ENCODE measurements at regions of chr6 and their contacts with region 1.

Region 1: DNA sequence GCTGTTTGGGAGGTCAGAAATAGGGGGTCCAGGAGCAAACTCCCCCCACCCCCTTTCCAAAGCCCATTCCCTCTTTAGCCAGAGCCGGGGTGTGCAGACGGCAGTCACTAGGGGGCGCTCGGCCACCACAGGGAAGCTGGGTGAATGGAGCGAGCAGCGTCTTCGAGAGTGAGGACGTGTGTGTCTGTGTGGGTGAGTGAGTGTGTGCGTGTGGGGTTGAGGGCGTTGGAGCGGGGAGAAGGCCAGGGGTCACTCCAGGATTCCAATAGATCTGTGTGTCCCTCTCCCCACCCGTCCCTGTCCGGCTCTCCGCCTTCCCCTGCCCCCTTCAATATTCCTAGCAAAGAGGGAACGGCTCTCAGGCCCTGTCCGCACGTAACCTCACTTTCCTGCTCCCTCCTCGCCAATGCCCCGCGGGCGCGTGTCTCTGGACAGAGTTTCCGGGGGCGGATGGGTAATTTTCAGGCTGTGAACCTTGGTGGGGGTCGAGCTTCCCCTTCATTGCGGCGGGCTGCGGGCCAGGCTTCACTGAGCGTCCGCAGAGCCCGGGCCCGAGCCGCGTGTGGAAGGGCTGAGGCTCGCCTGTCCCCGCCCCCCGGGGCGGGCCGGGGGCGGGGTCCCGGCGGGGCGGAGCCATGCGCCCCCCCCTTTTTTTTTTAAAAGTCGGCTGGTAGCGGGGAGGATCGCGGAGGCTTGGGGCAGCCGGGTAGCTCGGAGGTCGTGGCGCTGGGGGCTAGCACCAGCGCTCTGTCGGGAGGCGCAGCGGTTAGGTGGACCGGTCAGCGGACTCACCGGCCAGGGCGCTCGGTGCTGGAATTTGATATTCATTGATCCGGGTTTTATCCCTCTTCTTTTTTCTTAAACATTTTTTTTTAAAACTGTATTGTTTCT is at the start of gene VEGFA:
- DNase-seq: peak; percentile 94
- ATAC-seq: peak; percentile 73
- H3K4me3 Mint-ChIP-seq: peak within 1 kb of the TSS; percentile 97
- H3K27ac Mint-ChIP-seq: peak within 1 kb of the TSS; percentile 93
- H3K4me1 Mint-ChIP-seq: peaks cover 24% of the 10 kb centered on the region
- H3K27me3 Mint-ChIP-seq: peaks cover 2% of the 10 kb centered on the region
- CTCF ChIP-seq: peak; percentile 98
- total RNA-seq, gene VEGFA: 93.7 to 104 TPM

Region 2: DNA sequence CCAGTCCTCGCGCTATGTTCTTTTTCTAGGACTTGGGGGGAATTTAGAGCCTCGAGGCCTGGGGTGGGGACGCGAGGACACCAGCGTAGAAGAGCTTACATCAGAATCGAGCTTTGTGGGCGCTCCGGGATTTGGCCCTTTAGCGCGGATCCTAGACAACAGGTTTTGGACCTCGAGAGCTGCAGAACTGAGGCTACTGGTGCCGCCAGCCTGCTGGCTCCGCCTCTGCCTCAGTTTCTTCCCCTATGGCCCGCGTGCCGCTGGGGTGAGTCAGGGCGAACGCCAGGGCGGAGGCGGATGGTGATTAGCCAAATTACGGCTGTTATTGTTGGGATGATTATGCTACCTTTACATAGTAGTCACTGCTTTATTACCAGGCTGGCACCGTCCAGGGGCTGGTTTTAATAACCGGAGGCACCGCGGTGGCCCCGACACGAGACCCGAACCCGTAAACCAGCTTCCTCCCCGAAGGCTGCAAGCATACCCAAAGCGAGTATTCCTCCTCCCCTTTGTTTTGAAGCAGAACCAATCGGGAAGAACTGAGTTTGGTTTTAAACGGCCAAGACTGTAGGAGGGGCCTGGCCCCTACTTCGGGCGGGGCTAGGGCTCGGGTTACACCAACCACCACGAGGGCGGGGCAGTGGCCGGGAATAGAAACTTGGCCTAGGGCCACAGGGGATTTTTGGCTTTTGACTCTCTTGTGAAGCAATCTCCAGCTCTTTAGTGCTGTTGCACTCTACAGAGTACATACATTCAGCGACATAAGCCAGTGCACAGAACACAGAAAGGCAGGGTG is 140.1 kb before region 1 on chr6:
- CTCF ChIA-PET with region 1: interaction called, 10 read pairs
- POLR2A ChIA-PET with region 1: interaction called, 5 read pairs
- intact Hi-C with region 1: no loop called
- DNase-seq: peak; percentile 97
- ATAC-seq: peak; percentile 76
- H3K4me3 Mint-ChIP-seq: peak overlapping the region; percentile 98
- H3K27ac Mint-ChIP-seq: peak overlapping the region; percentile 100
- H3K4me1 Mint-ChIP-seq: peaks cover 24% of the 10 kb centered on the region
- H3K27me3 Mint-ChIP-seq: no peaks in the 10 kb centered on the region
- CTCF ChIP-seq: no peak

Region 3: DNA sequence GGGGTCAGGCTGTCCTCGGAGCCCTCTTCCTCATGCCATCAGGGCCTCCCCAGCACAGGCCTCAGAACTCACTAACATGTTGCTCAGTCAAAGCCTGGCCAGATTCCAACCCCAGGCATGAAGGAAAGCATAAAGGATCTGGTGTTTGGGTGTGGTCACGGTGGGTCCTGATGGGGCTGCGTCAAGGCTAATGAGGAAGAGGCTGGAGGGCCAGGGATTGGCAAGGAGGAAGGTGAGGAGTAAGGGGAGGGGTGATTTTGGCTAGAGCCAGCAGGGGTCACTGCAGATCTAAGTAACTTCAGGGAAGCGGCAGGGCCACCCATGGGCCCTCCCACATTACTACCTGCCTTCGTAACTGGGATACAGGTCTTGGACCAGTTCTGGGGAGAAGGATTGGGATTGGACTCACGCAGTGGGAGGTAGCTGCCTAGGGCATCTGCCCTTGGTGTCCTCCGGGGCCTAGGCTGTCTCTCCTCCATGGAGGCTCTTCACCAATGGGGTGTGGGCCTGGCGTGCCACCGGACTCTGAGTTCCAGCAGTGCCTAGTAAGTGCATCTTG is 46.0 kb before region 1 on chr6:
- CTCF ChIA-PET with region 1: interaction called, 69 read pairs
- POLR2A ChIA-PET with region 1: interaction called, 26 read pairs
- intact Hi-C with region 1: loop called (anchors 5 kb)
- DNase-seq: peak; percentile 89
- ATAC-seq: peak; percentile 76
- H3K4me3 Mint-ChIP-seq: peak overlapping the region; percentile 52
- H3K27ac Mint-ChIP-seq: peak overlapping the region; percentile 91
- H3K4me1 Mint-ChIP-seq: peaks cover 35% of the 10 kb centered on the region
- H3K27me3 Mint-ChIP-seq: no peaks in the 10 kb centered on the region
- CTCF ChIP-seq: peak; percentile 71

Region 4: GRCh38 chr6:43758617-43759050 is 11.1 kb before region 1 on chr6:
- CTCF ChIA-PET with region 1: interaction called, 33 read pairs
- POLR2A ChIA-PET with region 1: interaction called, 6 read pairs
- intact Hi-C with region 1: no loop called
- DNase-seq: peak; percentile 49
- ATAC-seq: peak; percentile 79
- H3K4me3 Mint-ChIP-seq: no peak overlapping the region
- H3K27ac Mint-ChIP-seq: no peak overlapping the region
- H3K4me1 Mint-ChIP-seq: peaks cover 3% of the 10 kb centered on the region
- H3K27me3 Mint-ChIP-seq: no peaks in the 10 kb centered on the region
- CTCF ChIP-seq: peak; percentile 78

Region 5: GRCh38 chr6:43847741-43848605 is 78.2 kb after region 1 on chr6:
- CTCF ChIA-PET with region 1: no interaction called
- POLR2A ChIA-PET with region 1: no interaction called
- intact Hi-C with region 1: no loop called
- DNase-seq: no peak
- ATAC-seq: no peak
- H3K4me3 Mint-ChIP-seq: no peak overlapping the region
- H3K27ac Mint-ChIP-seq: no peak overlapping the region
- H3K4me1 Mint-ChIP-seq: no peaks in the 10 kb centered on the region
- H3K27me3 Mint-ChIP-seq: peaks cover 2% of the 10 kb centered on the region
- CTCF ChIP-seq: no peak

Region 6: GRCh38 chr6:44004625-44005506 is 235.1 kb after region 1 on chr6:
- CTCF ChIA-PET with region 1: interaction called, 12 read pairs
- POLR2A ChIA-PET with region 1: interaction called, 6 read pairs
- intact Hi-C with region 1: no loop called
- DNase-seq: peak; percentile 61
- ATAC-seq: no peak
- H3K4me3 Mint-ChIP-seq: no peak overlapping the region
- H3K27ac Mint-ChIP-seq: no peak overlapping the region
- H3K4me1 Mint-ChIP-seq: peaks cover 30% of the 10 kb centered on the region
- H3K27me3 Mint-ChIP-seq: peaks cover 30% of the 10 kb centered on the region
- CTCF ChIP-seq: no peak

Measured in activated CD8-positive, alpha-beta T cell treated with anti-CD3 and anti-CD28 coated beads for 36 hours (primary cell).